Activated CD8-positive, alpha-beta T cell treated with anti-CD3 and anti-CD28 coated beads for 36 hours (primary cell): ENCODE measurements at regions of chr9 and their contacts with region 1.

Region 1: GRCh38 chr9:91101611-91102168 is 260.0 kb downstream of the AUH start:
- DNase-seq: peak; percentile 97
- ATAC-seq: peak; percentile 82
- H3K4me3 Mint-ChIP-seq: peak overlapping the region; percentile 79
- H3K27ac Mint-ChIP-seq: peak overlapping the region; percentile 95
- H3K4me1 Mint-ChIP-seq: peaks cover 58% of the 10 kb centered on the region
- H3K27me3 Mint-ChIP-seq: peaks cover 3% of the 10 kb centered on the region
- CTCF ChIP-seq: no peak

Region 2: GRCh38 chr9:91047993-91048607 is 53.6 kb before region 1 on chr9:
- CTCF ChIA-PET with region 1: interaction called, 3 read pairs
- POLR2A ChIA-PET with region 1: interaction called, 3 read pairs
- intact Hi-C with region 1: loop called (anchors 1 kb)
- DNase-seq: peak; percentile 70
- ATAC-seq: peak; percentile 86
- H3K4me3 Mint-ChIP-seq: peak overlapping the region; percentile 53
- H3K27ac Mint-ChIP-seq: peak overlapping the region; percentile 93
- H3K4me1 Mint-ChIP-seq: peaks cover 61% of the 10 kb centered on the region
- H3K27me3 Mint-ChIP-seq: peaks cover 30% of the 10 kb centered on the region
- CTCF ChIP-seq: no peak

Region 3: DNA sequence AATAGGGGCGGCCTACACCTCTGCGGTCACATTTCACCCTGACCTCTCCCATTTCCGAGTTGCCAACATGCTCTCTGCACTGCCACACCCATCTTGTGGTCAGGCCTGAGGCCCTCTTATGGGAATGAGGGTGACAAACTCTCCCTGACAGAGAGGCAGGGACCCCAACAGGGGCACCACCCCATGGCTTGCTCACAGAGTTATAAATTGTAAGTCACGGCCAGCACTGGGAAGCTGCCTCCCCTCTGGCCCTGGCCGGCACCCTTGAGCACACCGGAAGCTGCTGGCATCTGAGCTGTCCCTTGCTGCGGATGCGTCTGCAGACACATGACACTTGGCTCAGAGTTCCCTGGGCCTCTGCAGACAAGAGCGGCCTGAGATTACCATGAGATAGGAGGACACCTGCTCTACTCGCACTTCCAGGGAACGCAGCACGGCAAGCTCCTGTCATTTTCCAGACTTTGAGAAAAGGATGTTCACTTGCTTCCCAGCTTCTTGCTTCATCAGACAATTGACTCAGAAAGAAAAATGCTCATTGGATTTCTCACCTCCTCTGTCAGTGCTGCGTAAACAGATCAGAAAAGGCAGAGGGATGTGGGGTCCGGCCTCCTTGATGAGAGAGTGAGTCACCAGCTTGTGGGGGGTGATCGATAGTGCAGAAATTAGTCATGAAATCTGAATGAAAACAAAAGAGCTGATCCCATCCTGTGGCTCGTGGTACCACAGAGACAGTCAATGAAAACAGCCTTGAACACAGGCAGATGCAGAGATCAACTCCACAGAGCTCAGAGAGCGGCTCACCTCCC is 30.3 kb before region 1 on chr9:
- CTCF ChIA-PET with region 1: interaction called, 5 read pairs
- POLR2A ChIA-PET with region 1: interaction called, 12 read pairs
- intact Hi-C with region 1: no loop called
- DNase-seq: peak; percentile 93
- ATAC-seq: peak; percentile 97
- H3K4me3 Mint-ChIP-seq: peak overlapping the region; percentile 20
- H3K27ac Mint-ChIP-seq: peak overlapping the region; percentile 88
- H3K4me1 Mint-ChIP-seq: peaks cover 17% of the 10 kb centered on the region
- H3K27me3 Mint-ChIP-seq: peaks cover 3% of the 10 kb centered on the region
- CTCF ChIP-seq: no peak

Region 4: DNA sequence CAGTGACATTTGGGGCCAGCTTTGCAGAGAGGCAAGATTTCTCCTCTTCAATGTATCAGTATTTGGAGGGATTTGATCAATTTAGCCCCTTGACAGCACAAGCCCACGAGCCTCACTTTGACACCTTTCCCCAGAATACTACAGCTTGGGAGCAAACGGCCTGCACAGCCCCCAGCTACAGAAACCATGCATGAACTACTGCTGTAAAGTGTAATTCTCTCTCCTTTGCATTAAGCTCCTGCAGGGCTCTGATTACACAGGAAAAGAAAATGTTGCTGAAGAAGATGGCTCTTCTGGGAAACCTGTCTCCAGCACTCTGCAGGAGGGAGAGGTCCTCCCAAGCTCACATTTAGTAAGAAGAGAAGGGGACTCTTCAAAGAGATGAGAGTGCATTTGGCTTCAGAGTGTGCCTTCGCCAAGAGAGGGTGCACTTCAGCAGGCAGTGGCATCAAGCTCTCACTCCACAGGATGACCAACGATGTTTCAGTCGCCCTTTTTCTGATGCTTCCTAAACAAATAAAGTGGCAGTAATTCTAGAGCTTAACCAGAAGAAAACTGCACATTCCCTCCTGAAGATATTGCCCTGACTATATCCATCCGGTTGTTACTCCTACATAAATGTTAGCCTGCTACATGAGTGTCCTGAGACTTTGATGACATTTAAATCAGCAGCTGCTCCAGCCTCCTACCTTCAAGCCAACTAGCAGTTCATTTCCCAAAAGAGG is 12.1 kb before region 1 on chr9:
- CTCF ChIA-PET with region 1: interaction called, 17 read pairs
- POLR2A ChIA-PET with region 1: interaction called, 12 read pairs
- intact Hi-C with region 1: no loop called
- DNase-seq: peak; percentile 48
- ATAC-seq: peak; percentile 61
- H3K4me3 Mint-ChIP-seq: no peak overlapping the region
- H3K27ac Mint-ChIP-seq: peak overlapping the region; percentile 31
- H3K4me1 Mint-ChIP-seq: peaks cover 27% of the 10 kb centered on the region
- H3K27me3 Mint-ChIP-seq: peaks cover 1% of the 10 kb centered on the region
- CTCF ChIP-seq: peak; percentile 20

Region 5: GRCh38 chr9:91131433-91131839 is 29.7 kb after region 1 on chr9:
- CTCF ChIA-PET with region 1: interaction called, 3 read pairs
- POLR2A ChIA-PET with region 1: interaction called, 6 read pairs
- intact Hi-C with region 1: loop called (anchors 1 kb)
- DNase-seq: peak; percentile 91
- ATAC-seq: peak; percentile 98
- H3K4me3 Mint-ChIP-seq: peak overlapping the region; percentile 21
- H3K27ac Mint-ChIP-seq: peak overlapping the region; percentile 95
- H3K4me1 Mint-ChIP-seq: peaks cover 26% of the 10 kb centered on the region
- H3K27me3 Mint-ChIP-seq: no peaks in the 10 kb centered on the region
- CTCF ChIP-seq: no peak

Region 6: DNA sequence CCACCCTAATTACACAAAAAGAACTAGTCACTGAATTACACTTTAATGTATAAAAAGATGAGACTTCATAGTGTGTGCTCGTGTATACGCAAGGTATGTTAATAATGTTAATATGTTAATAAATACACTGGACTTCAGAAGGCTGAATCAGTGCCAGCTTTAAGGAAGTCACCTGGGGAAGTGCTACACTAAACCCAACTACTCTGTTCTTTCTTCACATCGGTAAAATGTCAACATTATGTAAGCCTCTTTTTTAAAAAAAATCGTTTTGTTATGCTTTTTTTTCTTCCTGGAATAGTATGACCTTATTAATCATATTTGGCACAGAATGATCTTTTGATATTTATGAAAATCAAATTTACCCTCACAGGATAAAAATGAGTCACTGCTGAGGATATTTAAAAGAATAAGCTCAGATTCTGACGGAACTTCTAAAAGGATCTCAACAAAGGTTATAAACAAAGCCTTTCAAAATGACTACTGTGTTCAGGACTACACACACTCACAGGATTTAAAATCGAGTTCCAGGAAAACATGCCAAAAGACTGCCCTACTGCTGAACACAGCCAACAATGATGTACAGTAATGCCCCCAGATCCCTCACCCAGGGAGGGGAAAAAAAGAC is 184.2 kb after region 1 on chr9:
- CTCF ChIA-PET with region 1: no interaction called
- POLR2A ChIA-PET with region 1: no interaction called
- intact Hi-C with region 1: no loop called
- DNase-seq: no peak
- ATAC-seq: peak; percentile 61
- H3K4me3 Mint-ChIP-seq: no peak overlapping the region
- H3K27ac Mint-ChIP-seq: peak overlapping the region; percentile 36
- H3K4me1 Mint-ChIP-seq: peaks cover 11% of the 10 kb centered on the region
- H3K27me3 Mint-ChIP-seq: no peaks in the 10 kb centered on the region
- CTCF ChIP-seq: no peak